ENCODE measurements at regions of chr20 and their contacts with region 1.

Region 1: GRCh38 chr20:17431621-17432364 is 99.4 kb downstream of the BFSP1 start:
- DNase-seq: peak in 8 of 9 experiments; percentile 22 to 63 (median 51)
- ATAC-seq: no peak
- H3K4me3 ChIP-seq: no peak overlapping the region
- H3K4me3 Mint-ChIP-seq: no peak overlapping the region
- H3K27ac ChIP-seq: no peak overlapping the region
- H3K27ac Mint-ChIP-seq: no peak overlapping the region
- H3K4me1 ChIP-seq: no peaks in the 10 kb centered on the region
- H3K4me1 Mint-ChIP-seq: no peaks in the 10 kb centered on the region
- H3K27me3 ChIP-seq: peaks cover 4 to 5% of the 10 kb centered on the region in 2 experiments
- H3K27me3 Mint-ChIP-seq: peaks cover 27% of the 10 kb centered on the region
- CTCF ChIP-seq: peak; percentile 97

Region 2: GRCh38 chr20:16615199-16615598 is 816.6 kb before region 1 on chr20:
- CTCF ChIA-PET with region 1: no interaction called
- POLR2A ChIA-PET with region 1: no interaction called
- intact Hi-C with region 1: no loop called
- DNase-seq: no peak
- ATAC-seq: no peak
- H3K4me3 ChIP-seq: no peak overlapping the region
- H3K4me3 Mint-ChIP-seq: no peak overlapping the region
- H3K27ac ChIP-seq: no peak overlapping the region
- H3K27ac Mint-ChIP-seq: no peak overlapping the region
- H3K4me1 ChIP-seq: no peaks in the 10 kb centered on the region
- H3K4me1 Mint-ChIP-seq: no peaks in the 10 kb centered on the region
- H3K27me3 ChIP-seq: no peaks in the 10 kb centered on the region
- H3K27me3 Mint-ChIP-seq: peaks cover 12% of the 10 kb centered on the region
- CTCF ChIP-seq: no peak

Region 3: GRCh38 chr20:16701296-16701695 is 730.5 kb before region 1 on chr20:
- CTCF ChIA-PET with region 1: no interaction called
- POLR2A ChIA-PET with region 1: no interaction called
- intact Hi-C with region 1: loop called in 1 of 2 experiments (anchors 5 kb)
- DNase-seq: peak in 5 of 9 experiments; percentile 17 to 58 (median 33)
- ATAC-seq: peak; percentile 44
- H3K4me3 ChIP-seq: no peak overlapping the region
- H3K4me3 Mint-ChIP-seq: no peak overlapping the region
- H3K27ac ChIP-seq: no peak overlapping the region
- H3K27ac Mint-ChIP-seq: no peak overlapping the region
- H3K4me1 ChIP-seq: no peaks in the 10 kb centered on the region
- H3K4me1 Mint-ChIP-seq: no peaks in the 10 kb centered on the region
- H3K27me3 ChIP-seq: no peaks in the 10 kb centered on the region
- H3K27me3 Mint-ChIP-seq: peaks cover 36% of the 10 kb centered on the region
- CTCF ChIP-seq: peak; percentile 54

Region 4: DNA sequence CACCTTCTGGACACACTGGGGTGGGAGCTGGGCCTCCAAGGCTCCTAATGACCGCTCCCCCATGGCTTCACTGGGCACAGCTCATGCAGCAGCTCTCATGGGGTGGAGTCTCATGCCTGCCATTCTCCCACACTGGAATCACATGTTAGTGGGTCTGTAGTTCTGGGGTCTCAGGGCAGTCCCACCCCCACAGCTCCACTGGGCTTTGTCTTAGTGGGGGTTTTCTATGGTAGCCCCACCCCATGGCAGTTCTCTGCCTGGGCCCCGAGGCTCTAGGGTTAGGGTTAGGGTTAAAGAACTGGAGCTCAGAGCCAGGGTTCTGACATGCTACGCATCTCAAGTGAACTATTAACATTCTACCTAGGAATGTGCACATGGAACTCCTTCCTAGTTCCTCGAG is 66.0 kb before region 1 on chr20:
- CTCF ChIA-PET with region 1: no interaction called
- POLR2A ChIA-PET with region 1: no interaction called
- intact Hi-C with region 1: no loop called
- DNase-seq: no peak
- ATAC-seq: no peak
- H3K4me3 ChIP-seq: no peak overlapping the region
- H3K4me3 Mint-ChIP-seq: no peak overlapping the region
- H3K27ac ChIP-seq: no peak overlapping the region
- H3K27ac Mint-ChIP-seq: no peak overlapping the region
- H3K4me1 ChIP-seq: no peaks in the 10 kb centered on the region
- H3K4me1 Mint-ChIP-seq: no peaks in the 10 kb centered on the region
- H3K27me3 ChIP-seq: no peaks in the 10 kb centered on the region
- H3K27me3 Mint-ChIP-seq: peaks cover 2% of the 10 kb centered on the region
- CTCF ChIP-seq: no peak

Region 5: DNA sequence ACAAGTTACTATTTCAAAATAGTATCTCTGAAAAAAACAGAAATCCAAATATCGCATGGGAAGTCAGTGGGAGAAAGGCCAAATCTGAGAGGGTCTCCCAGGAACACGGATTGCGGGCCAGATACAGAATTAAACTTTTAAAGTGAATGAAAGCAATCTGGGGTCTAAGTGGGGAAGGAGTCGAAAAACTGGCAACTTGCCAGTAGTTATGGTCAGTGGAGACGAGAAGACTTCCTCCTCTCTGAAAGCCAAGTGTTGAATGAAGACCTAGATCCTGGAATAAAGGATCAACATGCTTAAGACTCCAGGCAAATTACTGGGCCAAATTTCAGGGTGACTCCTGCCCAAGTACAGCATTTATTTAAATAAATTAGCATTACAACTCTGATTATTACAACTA is 24.2 kb before region 1 on chr20:
- CTCF ChIA-PET with region 1: no interaction called
- POLR2A ChIA-PET with region 1: no interaction called
- intact Hi-C with region 1: no loop called
- DNase-seq: no peak
- ATAC-seq: no peak
- H3K4me3 ChIP-seq: no peak overlapping the region
- H3K4me3 Mint-ChIP-seq: no peak overlapping the region
- H3K27ac ChIP-seq: no peak overlapping the region
- H3K27ac Mint-ChIP-seq: no peak overlapping the region
- H3K4me1 ChIP-seq: no peaks in the 10 kb centered on the region
- H3K4me1 Mint-ChIP-seq: no peaks in the 10 kb centered on the region
- H3K27me3 ChIP-seq: no peaks in the 10 kb centered on the region
- H3K27me3 Mint-ChIP-seq: peaks cover 8% of the 10 kb centered on the region
- CTCF ChIP-seq: no peak

Region 6: GRCh38 chr20:17421493-17421892 is 10.3 kb before region 1 on chr20:
- CTCF ChIA-PET with region 1: interaction called, 29 read pairs
- POLR2A ChIA-PET with region 1: no interaction called
- intact Hi-C with region 1: no loop called
- DNase-seq: no peak
- ATAC-seq: no peak
- H3K4me3 ChIP-seq: no peak overlapping the region
- H3K4me3 Mint-ChIP-seq: no peak overlapping the region
- H3K27ac ChIP-seq: no peak overlapping the region
- H3K27ac Mint-ChIP-seq: no peak overlapping the region
- H3K4me1 ChIP-seq: no peaks in the 10 kb centered on the region
- H3K4me1 Mint-ChIP-seq: no peaks in the 10 kb centered on the region
- H3K27me3 ChIP-seq: no peaks in the 10 kb centered on the region
- H3K27me3 Mint-ChIP-seq: peaks cover 8% of the 10 kb centered on the region
- CTCF ChIP-seq: no peak

Region 7: GRCh38 chr20:17579369-17580039 is 147.7 kb after region 1 on chr20:
- CTCF ChIA-PET with region 1: no interaction called
- POLR2A ChIA-PET with region 1: no interaction called
- intact Hi-C with region 1: no loop called
- DNase-seq: no peak
- ATAC-seq: no peak
- H3K4me3 ChIP-seq: no peak overlapping the region
- H3K4me3 Mint-ChIP-seq: no peak overlapping the region
- H3K27ac ChIP-seq: no peak overlapping the region
- H3K27ac Mint-ChIP-seq: no peak overlapping the region
- H3K4me1 ChIP-seq: no peaks in the 10 kb centered on the region
- H3K4me1 Mint-ChIP-seq: peaks cover 43% of the 10 kb centered on the region
- H3K27me3 ChIP-seq: no peaks in the 10 kb centered on the region
- H3K27me3 Mint-ChIP-seq: no peaks in the 10 kb centered on the region
- CTCF ChIP-seq: no peak

Measured in CD8-positive, alpha-beta T cell (primary cell).